Endothelial cell of umbilical vein (primary cell): ENCODE measurements at regions of chr10 and their contacts with region 1.

Region 1: GRCh38 chr10:44857363-44858016 is 53.6 kb upstream of the TMEM72 start:
- DNase-seq: peak; percentile 40
- H3K4me3 ChIP-seq: no peak overlapping the region
- H3K27ac ChIP-seq: no peak overlapping the region
- H3K4me1 ChIP-seq: no peaks in the 10 kb centered on the region
- H3K27me3 ChIP-seq: no peaks in the 10 kb centered on the region
- CTCF ChIP-seq: peak; percentile 94 to 97
- POLR2A ChIP-seq: no peak

Region 2: GRCh38 chr10:43170491-43170890 is 1687.0 kb before region 1 on chr10:
- CTCF ChIA-PET with region 1: no interaction called
- POLR2A ChIA-PET with region 1: no interaction called
- dilution Hi-C with region 1: no loop called
- intact Hi-C with region 1: no loop called
- DNase-seq: no peak
- H3K4me3 ChIP-seq: no peak overlapping the region
- H3K27ac ChIP-seq: no peak overlapping the region
- H3K4me1 ChIP-seq: peaks cover 8% of the 10 kb centered on the region
- H3K27me3 ChIP-seq: no peaks in the 10 kb centered on the region
- CTCF ChIP-seq: no peak
- POLR2A ChIP-seq: no peak

Region 3: GRCh38 chr10:43671656-43672531 is 1185.6 kb before region 1 on chr10:
- CTCF ChIA-PET with region 1: interaction called, 9 read pairs
- POLR2A ChIA-PET with region 1: no interaction called
- dilution Hi-C with region 1: no loop called
- intact Hi-C with region 1: loop called (anchors 1 kb)
- DNase-seq: peak; percentile 69
- H3K4me3 ChIP-seq: no peak overlapping the region
- H3K27ac ChIP-seq: no peak overlapping the region
- H3K4me1 ChIP-seq: no peaks in the 10 kb centered on the region
- H3K27me3 ChIP-seq: peaks cover 9 to 12% of the 10 kb centered on the region in 2 experiments
- CTCF ChIP-seq: peak; percentile 47 to 64
- POLR2A ChIP-seq: no peak

Region 4: DNA sequence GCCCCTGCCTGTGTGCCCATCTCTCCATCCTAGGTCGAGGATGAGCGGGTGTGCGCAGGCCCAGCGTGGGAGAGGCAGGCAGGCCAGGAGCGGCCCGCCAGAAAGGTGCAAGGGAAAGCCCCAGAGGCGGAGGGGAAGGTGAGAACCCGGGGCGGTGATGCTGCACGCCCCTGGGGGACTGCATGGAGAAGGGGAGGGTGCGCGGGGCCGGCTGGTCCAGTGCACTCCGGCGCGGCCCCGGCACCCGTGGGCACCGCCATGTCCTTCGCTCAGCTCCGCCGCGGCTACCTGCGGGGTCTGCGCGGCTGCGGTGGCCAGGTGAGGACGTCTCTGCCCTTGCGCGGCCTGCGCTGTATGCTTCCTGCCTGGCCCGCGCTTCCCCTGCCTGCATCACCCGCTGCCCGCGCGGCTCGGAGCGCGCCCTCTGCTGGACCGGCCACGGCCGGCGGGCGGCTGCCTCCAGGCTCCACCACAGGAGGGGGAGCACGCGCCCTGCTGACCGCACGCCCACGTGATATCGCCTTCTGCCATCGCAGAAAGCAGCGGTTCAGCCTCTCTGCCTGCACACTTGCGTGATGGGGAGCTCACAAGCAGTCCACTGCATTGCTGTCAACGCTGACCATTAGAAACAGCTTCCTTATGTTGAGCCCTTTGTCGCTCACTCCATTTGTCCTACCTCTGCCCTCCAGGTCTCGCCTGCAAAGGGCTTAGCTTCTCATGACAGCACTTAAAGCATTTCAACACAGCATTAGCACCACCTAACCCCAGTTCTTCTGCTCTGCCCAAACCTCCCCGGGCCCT is 546.5 kb before region 1 on chr10:
- CTCF ChIA-PET with region 1: no interaction called
- POLR2A ChIA-PET with region 1: no interaction called
- dilution Hi-C with region 1: no loop called
- intact Hi-C with region 1: loop called (anchors 1 kb)
- DNase-seq: peak; percentile 53
- H3K4me3 ChIP-seq: no peak overlapping the region
- H3K27ac ChIP-seq: no peak overlapping the region
- H3K4me1 ChIP-seq: no peaks in the 10 kb centered on the region
- H3K27me3 ChIP-seq: no peaks in the 10 kb centered on the region
- CTCF ChIP-seq: peak; percentile 85 to 87
- POLR2A ChIP-seq: no peak

Region 5: GRCh38 chr10:44386546-44387052 is 470.9 kb before region 1 on chr10:
- CTCF ChIA-PET with region 1: interaction called, 46 read pairs
- POLR2A ChIA-PET with region 1: no interaction called
- dilution Hi-C with region 1: no loop called
- intact Hi-C with region 1: loop called (anchors 1 kb)
- DNase-seq: peak; percentile 37
- H3K4me3 ChIP-seq: no peak overlapping the region
- H3K27ac ChIP-seq: no peak overlapping the region
- H3K4me1 ChIP-seq: no peaks in the 10 kb centered on the region
- H3K27me3 ChIP-seq: peaks cover 15 to 25% of the 10 kb centered on the region in 2 experiments
- CTCF ChIP-seq: peak; percentile 81 to 94
- POLR2A ChIP-seq: no peak

Region 6: GRCh38 chr10:44569193-44570091 is 288.0 kb before region 1 on chr10:
- CTCF ChIA-PET with region 1: interaction called, 3 read pairs
- POLR2A ChIA-PET with region 1: no interaction called
- dilution Hi-C with region 1: no loop called
- intact Hi-C with region 1: loop called (anchors 10 kb)
- DNase-seq: peak; percentile 93
- H3K4me3 ChIP-seq: no peak overlapping the region
- H3K27ac ChIP-seq: peak overlapping the region; percentile 83
- H3K4me1 ChIP-seq: peaks cover 18% of the 10 kb centered on the region
- H3K27me3 ChIP-seq: no peaks in the 10 kb centered on the region
- CTCF ChIP-seq: no peak
- POLR2A ChIP-seq: peak; percentile 50

Region 7: DNA sequence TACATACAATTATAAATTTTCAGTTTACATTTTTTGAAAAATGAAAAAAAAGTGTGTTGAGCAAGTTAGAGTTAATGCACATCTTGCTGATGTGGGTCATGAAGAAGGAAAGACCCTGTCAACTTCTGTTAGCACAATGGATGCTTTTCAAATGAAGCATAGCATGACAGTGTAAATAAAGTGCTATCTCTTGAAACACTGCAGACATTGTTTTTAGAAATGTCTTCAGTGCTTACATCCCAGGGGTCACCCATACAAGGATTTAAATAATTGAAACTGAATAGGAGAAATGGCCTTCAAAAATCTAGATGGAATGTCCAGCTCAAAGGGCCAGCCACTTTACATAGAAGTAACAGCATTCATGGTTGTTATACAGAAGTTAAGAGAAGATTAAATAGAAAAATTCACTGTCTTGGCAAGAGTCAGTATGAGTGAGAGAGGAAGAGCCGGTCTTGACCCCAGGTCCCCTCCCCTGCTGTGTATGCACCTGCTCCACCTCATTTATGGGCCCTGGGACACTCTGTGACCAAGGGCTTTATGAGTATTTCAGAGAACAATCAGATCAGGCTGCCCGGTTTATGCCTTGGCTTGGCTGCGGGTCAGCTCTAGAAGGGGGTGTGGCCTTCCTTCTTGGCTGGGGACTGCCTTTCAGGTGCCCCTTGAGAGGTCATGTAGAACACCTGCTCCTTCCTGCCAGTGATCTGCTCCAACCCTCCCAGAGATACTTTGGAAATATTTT is 184.1 kb before region 1 on chr10:
- CTCF ChIA-PET with region 1: no interaction called
- POLR2A ChIA-PET with region 1: no interaction called
- dilution Hi-C with region 1: no loop called
- intact Hi-C with region 1: loop called (anchors 10 kb)
- DNase-seq: no peak
- H3K4me3 ChIP-seq: no peak overlapping the region
- H3K27ac ChIP-seq: no peak overlapping the region
- H3K4me1 ChIP-seq: no peaks in the 10 kb centered on the region
- H3K27me3 ChIP-seq: no peaks in the 10 kb centered on the region
- CTCF ChIP-seq: no peak
- POLR2A ChIP-seq: no peak

Region 8: DNA sequence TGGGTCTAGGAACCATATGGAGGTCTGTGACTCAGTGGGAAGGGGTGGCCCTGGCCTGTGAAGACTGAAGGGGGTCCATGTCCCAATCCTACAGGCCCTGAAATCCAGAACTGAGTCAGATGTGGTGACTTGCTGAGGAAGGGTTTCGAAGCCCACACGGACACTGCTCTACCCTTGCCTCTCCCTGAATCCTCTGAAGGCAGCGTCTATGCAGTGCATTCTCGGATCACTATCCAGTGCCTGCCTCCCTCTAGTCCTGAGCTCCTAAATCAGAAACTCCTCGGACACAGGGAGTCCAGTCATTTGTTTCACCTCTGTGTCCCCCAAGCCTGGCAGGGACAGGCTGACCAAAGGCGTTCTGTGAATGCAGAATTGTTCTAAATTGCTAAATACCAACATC is 28.2 kb after region 1 on chr10:
- CTCF ChIA-PET with region 1: no interaction called
- POLR2A ChIA-PET with region 1: no interaction called
- dilution Hi-C with region 1: no loop called
- intact Hi-C with region 1: no loop called
- DNase-seq: no peak
- H3K4me3 ChIP-seq: no peak overlapping the region
- H3K27ac ChIP-seq: no peak overlapping the region
- H3K4me1 ChIP-seq: no peaks in the 10 kb centered on the region
- H3K27me3 ChIP-seq: no peaks in the 10 kb centered on the region
- CTCF ChIP-seq: no peak
- POLR2A ChIP-seq: no peak

Region 9: GRCh38 chr10:45106236-45106856 is 248.9 kb after region 1 on chr10:
- CTCF ChIA-PET with region 1: no interaction called
- POLR2A ChIA-PET with region 1: no interaction called
- dilution Hi-C with region 1: no loop called
- intact Hi-C with region 1: no loop called
- DNase-seq: no peak
- H3K4me3 ChIP-seq: no peak overlapping the region
- H3K27ac ChIP-seq: no peak overlapping the region
- H3K4me1 ChIP-seq: no peaks in the 10 kb centered on the region
- H3K27me3 ChIP-seq: peaks cover 5 to 8% of the 10 kb centered on the region in 2 experiments
- CTCF ChIP-seq: no peak
- POLR2A ChIP-seq: no peak